ENCODE measurements at regions of chr3 and their contacts with region 1.

Region 1: DNA sequence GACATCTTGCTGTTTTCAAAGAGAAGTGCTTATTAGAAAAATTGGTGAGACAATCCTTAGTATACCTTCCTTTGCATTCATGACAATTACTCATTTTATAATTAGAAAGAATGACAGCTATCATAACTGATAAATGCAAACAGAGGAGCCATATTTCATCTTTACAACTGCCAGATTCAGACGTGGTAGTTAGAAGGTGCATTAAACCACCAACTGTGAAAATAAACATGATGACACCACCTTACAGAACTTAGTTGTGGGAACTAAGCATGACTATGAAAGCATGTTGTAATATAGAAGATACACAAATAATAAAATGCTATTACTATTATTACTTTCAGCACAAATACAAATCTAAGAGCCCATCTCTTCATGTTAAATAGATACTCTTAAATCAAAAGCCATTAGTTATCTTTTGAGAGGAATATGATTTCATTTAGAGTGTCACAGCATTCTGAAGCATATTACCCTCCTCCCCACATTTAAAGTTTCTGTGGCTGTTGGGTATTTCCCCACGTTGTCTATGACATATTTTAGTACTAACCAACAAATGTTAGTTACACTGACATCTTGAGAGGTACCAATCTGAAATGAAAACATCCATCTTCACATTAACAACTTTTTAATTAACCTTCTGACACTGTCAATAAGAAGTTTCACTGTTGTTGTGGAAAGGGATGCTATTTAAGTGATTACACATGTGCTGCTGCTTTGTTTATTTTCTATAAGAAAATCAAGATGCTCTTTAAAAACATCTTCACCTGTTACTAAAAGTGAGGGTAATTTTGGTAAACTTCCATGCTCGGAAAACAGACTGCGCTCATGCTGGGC is 163.8 kb downstream of the LSAMP start:
- DNase-seq: no peak
- H3K4me3 ChIP-seq: no peak overlapping the region
- CTCF ChIP-seq: no peak
- POLR2A ChIP-seq: no peak

Region 2: DNA sequence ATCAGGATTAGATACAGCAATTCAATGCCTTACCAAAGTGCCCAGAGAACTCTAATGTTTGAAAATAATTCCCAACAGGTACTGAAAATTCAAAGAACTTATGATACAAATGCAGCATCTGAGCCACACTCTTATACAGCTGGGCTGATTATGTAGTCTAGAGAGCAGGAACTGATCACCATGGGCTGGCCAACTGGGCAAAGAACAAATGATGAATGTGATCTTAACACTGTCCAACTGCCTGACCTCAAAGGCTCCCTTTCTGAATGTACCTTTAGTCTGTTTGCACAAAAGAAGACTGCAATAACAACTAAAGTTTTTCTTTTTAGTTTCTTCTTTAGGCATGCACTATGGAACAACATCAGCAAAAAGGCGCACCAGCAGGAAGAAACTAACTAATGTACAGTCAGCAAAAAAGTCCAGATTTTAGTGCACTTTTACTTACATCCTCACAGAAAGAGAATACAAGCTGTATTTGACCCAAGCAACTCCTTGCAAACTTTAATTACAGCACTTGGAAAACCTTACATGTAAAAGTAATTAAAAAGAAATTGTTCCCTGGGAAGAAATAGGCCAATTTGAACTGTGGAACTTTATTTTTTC is 1658.0 kb after region 1 on chr3:
- intact Hi-C with region 1: loop called (anchors 5 kb)
- DNase-seq: no peak
- H3K4me3 ChIP-seq: no peak overlapping the region
- CTCF ChIP-seq: no peak
- POLR2A ChIP-seq: no peak

Measured in lower leg skin (tissue), 4 donors.